Right ventricle myocardium inferior (tissue), 1 donor: ENCODE measurements at regions of chr5 and their contacts with region 1.

Region 1: DNA sequence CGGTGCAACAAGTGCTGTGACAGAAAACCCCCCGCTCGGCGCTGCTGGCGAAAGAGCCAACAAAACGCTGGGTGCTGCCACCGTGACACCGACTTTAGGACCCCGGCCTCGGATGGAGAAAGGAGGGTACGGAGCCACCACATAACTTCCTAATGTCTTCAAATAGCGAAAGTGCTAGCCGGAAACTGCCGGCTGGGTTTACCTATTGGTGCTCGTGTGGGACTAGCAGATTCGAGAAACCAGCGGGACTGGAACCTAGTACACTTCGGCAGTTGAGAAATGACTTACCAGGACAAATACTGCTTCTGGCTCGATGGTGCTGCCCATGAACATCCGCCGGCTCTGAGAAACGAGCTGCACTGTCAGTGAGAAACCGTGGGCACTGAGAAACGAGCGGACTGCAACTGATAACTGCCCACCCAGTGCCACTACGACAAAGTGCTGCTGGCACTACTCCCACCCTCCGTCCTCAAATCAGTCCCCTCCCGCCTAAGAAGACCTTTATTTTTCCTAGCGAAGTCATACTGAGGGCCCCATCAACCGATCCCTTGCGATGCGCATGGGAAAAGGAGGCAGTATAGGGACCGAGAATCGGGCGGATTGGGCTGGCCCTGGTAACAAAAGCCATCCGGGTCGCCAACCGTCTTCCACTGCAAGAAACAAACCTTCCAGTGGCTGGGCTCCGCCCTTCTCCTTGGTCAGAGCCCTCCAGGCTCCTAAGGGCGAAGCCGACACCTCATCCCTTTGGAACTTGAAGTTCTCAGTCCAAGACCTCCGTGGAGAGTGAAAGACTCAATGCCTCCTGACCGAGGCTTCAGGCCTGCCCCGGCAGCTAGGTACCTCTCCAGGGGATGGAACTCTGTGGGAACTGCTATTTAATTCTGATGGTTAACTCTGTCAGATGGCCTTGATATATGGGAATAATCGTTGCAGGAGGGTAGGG is 27.0 kb upstream of the ANXA2R start:
- DNase-seq: peak; percentile 92
- ATAC-seq: peak; percentile 74

Region 2: GRCh38 chr5:42908509-42909488 is 158.3 kb before region 1 on chr5:
- intact Hi-C with region 1: loop called (anchors 10 kb)
- DNase-seq: peak; percentile 96
- ATAC-seq: peak; percentile 93

Region 3: GRCh38 chr5:43040287-43041098 is 26.6 kb before region 1 on chr5 and contains the start of gene ANXA2R:
- intact Hi-C with region 1: loop called (anchors 1 kb)
- DNase-seq: peak; percentile 89
- ATAC-seq: peak; percentile 66
- total RNA-seq, gene ANXA2R: 0.84 TPM

Region 4: GRCh38 chr5:43120720-43121564 is 53.9 kb after region 1 on chr5 and contains the start of gene ZNF131:
- intact Hi-C with region 1: loop called (anchors 1 kb)
- DNase-seq: peak; percentile 99
- ATAC-seq: peak; percentile 98
- total RNA-seq, gene ZNF131: 14.6 TPM

Region 5: GRCh38 chr5:43484106-43484849 is 417.2 kb after region 1 on chr5:
- intact Hi-C with region 1: loop called (anchors 2 kb)
- DNase-seq: peak; percentile 87
- ATAC-seq: peak; percentile 72